Activated CD4-positive, alpha-beta memory T cell treated with anti-CD3 and anti-CD28 coated beads for 36 hours (primary cell): ENCODE measurements at regions of chr19 and their contacts with region 1.

Region 1: GRCh38 chr19:16041299-16041990 is 34.9 kb upstream of the TPM4 start:
- DNase-seq: peak; percentile 84
- H3K4me3 Mint-ChIP-seq: peak overlapping the region; percentile 32
- H3K27ac Mint-ChIP-seq: no peak overlapping the region
- H3K4me1 Mint-ChIP-seq: peaks cover 12% of the 10 kb centered on the region
- H3K27me3 Mint-ChIP-seq: peaks cover 1% of the 10 kb centered on the region

Region 2: GRCh38 chr19:16070366-16070990 is 29.0 kb after region 1 on chr19:
- CTCF ChIA-PET with region 1: interaction called, 43 read pairs
- POLR2A ChIA-PET with region 1: no interaction called
- intact Hi-C with region 1: no loop called
- DNase-seq: peak; percentile 94
- H3K4me3 Mint-ChIP-seq: no peak overlapping the region
- H3K27ac Mint-ChIP-seq: no peak overlapping the region
- H3K4me1 Mint-ChIP-seq: peaks cover 43% of the 10 kb centered on the region
- H3K27me3 Mint-ChIP-seq: no peaks in the 10 kb centered on the region

Region 3: GRCh38 chr19:16095071-16095571 is 53.7 kb after region 1 on chr19:
- CTCF ChIA-PET with region 1: interaction called, 11 read pairs
- POLR2A ChIA-PET with region 1: no interaction called
- intact Hi-C with region 1: no loop called
- DNase-seq: peak; percentile 44
- H3K4me3 Mint-ChIP-seq: no peak overlapping the region
- H3K27ac Mint-ChIP-seq: peak overlapping the region; percentile 84
- H3K4me1 Mint-ChIP-seq: peaks cover 26% of the 10 kb centered on the region
- H3K27me3 Mint-ChIP-seq: no peaks in the 10 kb centered on the region

Region 4: GRCh38 chr19:16118489-16119033 is 77.1 kb after region 1 on chr19:
- CTCF ChIA-PET with region 1: interaction called, 5 read pairs
- POLR2A ChIA-PET with region 1: no interaction called
- intact Hi-C with region 1: loop called (anchors 2 kb)
- DNase-seq: peak; percentile 84
- H3K4me3 Mint-ChIP-seq: peak overlapping the region; percentile 55
- H3K27ac Mint-ChIP-seq: peak overlapping the region; percentile 97
- H3K4me1 Mint-ChIP-seq: peaks cover 79% of the 10 kb centered on the region
- H3K27me3 Mint-ChIP-seq: no peaks in the 10 kb centered on the region

Region 5: DNA sequence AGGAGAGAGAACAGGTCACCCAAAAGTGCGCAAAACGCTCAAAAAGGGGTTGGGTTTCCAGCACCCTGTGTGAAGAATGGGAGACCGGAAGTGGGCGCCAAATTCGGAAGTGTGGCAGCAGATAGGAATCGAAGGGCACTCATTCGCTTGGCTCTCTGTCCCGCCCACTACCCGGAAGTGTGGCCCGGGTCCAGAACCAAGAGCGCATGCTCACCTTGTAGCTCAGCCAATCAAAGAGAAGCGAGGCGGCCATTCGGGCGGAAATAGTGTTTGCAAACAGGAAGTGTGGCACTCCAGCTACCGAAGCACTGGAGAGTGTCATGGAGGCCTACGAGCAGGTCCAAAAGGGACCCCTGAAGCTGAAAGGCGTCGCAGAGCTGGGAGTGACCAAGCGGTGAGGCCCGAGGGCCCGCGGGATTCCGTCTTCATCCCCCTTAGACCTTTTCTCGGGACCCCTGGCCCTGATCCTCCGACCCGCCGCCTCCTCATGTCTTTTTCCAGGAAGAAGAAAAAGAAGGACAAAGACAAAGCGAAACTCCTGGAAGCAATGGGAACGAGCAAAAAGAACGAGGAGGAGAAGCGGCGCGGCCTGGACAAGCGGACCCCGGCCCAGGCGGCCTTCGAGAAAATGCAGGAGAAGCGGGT is 143.8 kb after region 1 on chr19 and contains the start of gene FAM32A:
- CTCF ChIA-PET with region 1: interaction called, 62 read pairs
- POLR2A ChIA-PET with region 1: interaction called, 3 read pairs
- intact Hi-C with region 1: loop called (anchors 1 kb)
- DNase-seq: peak; percentile 100
- H3K4me3 Mint-ChIP-seq: peak within 1 kb of the TSS; percentile 98
- H3K27ac Mint-ChIP-seq: peak within 1 kb of the TSS; percentile 94
- H3K4me1 Mint-ChIP-seq: peaks cover 28% of the 10 kb centered on the region
- H3K27me3 Mint-ChIP-seq: peaks cover 4% of the 10 kb centered on the region
- total RNA-seq, gene FAM32A: 43.8 to 44.3 TPM

Region 6: DNA sequence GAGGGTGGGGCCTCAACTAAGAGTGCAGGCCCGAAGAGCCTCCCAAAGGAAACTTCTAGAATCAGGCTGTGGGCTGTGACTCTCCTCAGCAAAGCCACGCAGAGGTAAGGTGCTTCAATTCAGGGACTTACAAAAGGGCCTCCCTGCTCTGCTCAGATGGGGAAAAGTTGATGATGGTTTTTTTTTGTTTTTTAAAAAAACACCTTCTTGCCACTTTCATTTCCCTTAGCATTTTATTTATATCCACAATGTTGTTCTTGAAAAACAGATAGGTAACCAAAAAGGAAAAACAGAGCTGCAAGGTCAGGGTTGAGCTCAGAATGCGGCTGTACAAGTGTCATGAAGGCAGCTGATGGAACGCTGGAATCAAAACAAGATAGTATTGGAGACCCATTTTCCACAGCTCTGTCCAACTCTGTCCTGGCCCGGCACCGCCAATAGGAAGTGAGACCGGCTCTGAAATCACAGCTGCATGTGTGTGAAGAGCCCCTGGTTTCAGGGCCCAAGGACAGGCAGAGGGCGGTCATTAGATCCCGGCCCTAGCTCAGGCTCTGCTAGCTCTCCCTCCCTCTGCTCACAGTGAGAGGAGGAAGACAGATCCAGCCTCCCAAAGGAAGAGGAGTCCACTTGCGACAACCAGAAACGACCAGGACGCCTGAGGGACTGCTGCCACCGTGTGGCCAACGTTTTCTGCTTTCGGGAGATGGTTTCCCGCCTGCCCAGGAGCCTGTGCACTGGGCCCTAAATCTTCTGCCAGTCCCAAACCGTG is 341.5 kb after region 1 on chr19:
- CTCF ChIA-PET with region 1: interaction called, 7 read pairs
- POLR2A ChIA-PET with region 1: no interaction called
- intact Hi-C with region 1: loop called (anchors 10 kb)
- DNase-seq: peak; percentile 86
- H3K4me3 Mint-ChIP-seq: no peak overlapping the region
- H3K27ac Mint-ChIP-seq: peak overlapping the region; percentile 60
- H3K4me1 Mint-ChIP-seq: peaks cover 41% of the 10 kb centered on the region
- H3K27me3 Mint-ChIP-seq: no peaks in the 10 kb centered on the region